CD8-positive, alpha-beta T cell (primary cell): ENCODE measurements at regions of chr10 and their contacts with region 1.

Region 1: DNA sequence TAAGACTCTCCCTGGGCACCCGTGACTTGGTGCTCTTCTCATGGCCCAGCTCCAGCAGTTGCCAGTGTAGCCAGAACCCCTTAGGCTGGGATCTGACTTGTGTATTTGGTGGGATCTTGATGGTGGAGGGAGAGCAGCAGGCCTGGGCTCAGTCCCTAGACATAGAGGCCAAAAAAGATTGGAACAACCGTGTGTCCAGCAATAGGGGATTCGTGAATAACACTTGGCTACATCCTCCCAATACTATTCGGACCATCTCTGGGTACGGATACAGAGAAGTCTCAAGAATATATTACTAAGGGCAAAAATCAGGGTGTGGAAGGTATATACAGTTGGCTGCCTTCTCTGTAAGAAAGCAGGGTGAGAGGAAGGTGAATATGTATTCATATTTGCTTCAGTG is 17.2 kb downstream of the RBM20 start:
- DNase-seq: no peak
- ATAC-seq: no peak
- H3K4me3 ChIP-seq: no peak overlapping the region
- H3K4me3 Mint-ChIP-seq: no peak overlapping the region
- H3K27ac ChIP-seq: no peak overlapping the region
- H3K27ac Mint-ChIP-seq: no peak overlapping the region
- H3K4me1 ChIP-seq: no peaks in the 10 kb centered on the region
- H3K4me1 Mint-ChIP-seq: peaks cover 3% of the 10 kb centered on the region
- H3K27me3 ChIP-seq: peaks cover 0 to 3% of the 10 kb centered on the region in 2 experiments
- H3K27me3 Mint-ChIP-seq: peaks cover 10% of the 10 kb centered on the region
- CTCF ChIP-seq: no peak

Region 2: DNA sequence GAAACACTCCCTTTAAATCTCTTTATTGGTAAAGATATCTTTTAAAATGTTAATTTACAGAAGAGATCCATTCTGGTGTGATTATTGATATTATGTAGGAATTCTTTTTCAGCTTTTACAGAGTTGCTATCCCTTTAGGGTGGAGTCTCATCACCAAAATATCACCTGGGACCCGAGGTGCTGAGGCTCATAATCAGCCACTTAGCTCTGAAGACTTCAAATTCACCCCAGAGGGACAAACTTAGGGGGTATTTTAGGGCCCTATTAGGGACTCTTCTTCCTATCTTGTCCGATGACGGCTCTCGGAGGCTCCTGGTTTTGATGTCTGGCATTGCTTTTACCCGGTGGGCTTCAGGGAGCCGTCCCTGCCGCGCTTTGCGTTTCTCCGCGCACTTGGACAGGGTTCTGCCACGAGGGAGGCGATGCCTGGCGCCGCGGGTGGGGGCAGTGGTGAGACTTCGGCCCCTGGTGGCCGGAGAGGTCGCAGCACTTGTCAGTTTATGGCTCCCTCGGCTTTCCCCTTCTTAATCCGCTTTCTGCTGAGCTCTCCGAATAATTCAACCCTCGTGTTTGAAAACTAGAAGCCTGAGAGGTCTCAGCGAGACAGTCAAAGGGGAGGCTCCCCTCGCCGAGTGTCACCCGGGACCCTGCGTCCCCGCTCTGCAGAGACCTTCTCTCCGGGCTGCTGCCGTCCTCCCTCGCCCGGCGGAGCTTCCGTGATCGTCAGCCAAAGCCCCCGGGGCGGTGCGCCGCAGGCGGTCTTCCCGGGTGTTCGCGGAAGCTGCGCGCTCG is 10.7 kb after region 1 on chr10:
- CTCF ChIA-PET with region 1: interaction called, 11 read pairs
- POLR2A ChIA-PET with region 1: interaction called, 3 read pairs
- intact Hi-C with region 1: no loop called
- DNase-seq: peak; percentile 36 to 82 (median 69)
- ATAC-seq: peak; percentile 85
- H3K4me3 ChIP-seq: peak overlapping the region; percentile 66 to 76
- H3K4me3 Mint-ChIP-seq: peak overlapping the region; percentile 91
- H3K27ac ChIP-seq: peak overlapping the region; percentile 55 to 69
- H3K27ac Mint-ChIP-seq: peak overlapping the region; percentile 91
- H3K4me1 ChIP-seq: peaks cover 4% of the 10 kb centered on the region
- H3K4me1 Mint-ChIP-seq: peaks cover 4% of the 10 kb centered on the region
- H3K27me3 ChIP-seq: no peaks in the 10 kb centered on the region
- H3K27me3 Mint-ChIP-seq: no peaks in the 10 kb centered on the region
- CTCF ChIP-seq: peak; percentile 58

Region 3: DNA sequence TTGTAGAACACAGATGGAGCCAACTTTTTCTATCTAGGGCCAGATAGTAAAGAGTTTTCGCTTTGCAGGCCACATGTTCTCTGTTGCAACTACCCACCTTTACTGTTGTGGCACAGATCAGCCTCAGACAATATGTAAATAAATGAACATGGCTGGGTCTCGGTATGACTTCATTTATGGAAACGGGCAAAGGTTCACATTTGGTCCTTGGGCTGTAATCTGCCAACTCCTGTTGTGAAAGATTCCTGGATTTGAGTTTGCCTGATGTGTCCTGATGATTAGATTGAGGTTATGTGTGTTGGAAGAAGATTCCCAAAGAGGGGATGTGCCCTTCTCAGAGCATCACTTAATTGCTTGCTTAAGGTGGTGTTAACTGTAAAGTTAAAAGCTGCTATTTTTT is 21.1 kb after region 1 on chr10:
- CTCF ChIA-PET with region 1: no interaction called
- POLR2A ChIA-PET with region 1: no interaction called
- intact Hi-C with region 1: no loop called
- DNase-seq: no peak
- ATAC-seq: no peak
- H3K4me3 ChIP-seq: no peak overlapping the region
- H3K4me3 Mint-ChIP-seq: no peak overlapping the region
- H3K27ac ChIP-seq: no peak overlapping the region
- H3K27ac Mint-ChIP-seq: no peak overlapping the region
- H3K4me1 ChIP-seq: peaks cover 3% of the 10 kb centered on the region
- H3K4me1 Mint-ChIP-seq: peaks cover 4% of the 10 kb centered on the region
- H3K27me3 ChIP-seq: no peaks in the 10 kb centered on the region
- H3K27me3 Mint-ChIP-seq: peaks cover 7% of the 10 kb centered on the region
- CTCF ChIP-seq: no peak